Cardiac septum (tissue), 1 donor: ENCODE measurements at regions of chr11 and their contacts with region 1.

Region 1: DNA sequence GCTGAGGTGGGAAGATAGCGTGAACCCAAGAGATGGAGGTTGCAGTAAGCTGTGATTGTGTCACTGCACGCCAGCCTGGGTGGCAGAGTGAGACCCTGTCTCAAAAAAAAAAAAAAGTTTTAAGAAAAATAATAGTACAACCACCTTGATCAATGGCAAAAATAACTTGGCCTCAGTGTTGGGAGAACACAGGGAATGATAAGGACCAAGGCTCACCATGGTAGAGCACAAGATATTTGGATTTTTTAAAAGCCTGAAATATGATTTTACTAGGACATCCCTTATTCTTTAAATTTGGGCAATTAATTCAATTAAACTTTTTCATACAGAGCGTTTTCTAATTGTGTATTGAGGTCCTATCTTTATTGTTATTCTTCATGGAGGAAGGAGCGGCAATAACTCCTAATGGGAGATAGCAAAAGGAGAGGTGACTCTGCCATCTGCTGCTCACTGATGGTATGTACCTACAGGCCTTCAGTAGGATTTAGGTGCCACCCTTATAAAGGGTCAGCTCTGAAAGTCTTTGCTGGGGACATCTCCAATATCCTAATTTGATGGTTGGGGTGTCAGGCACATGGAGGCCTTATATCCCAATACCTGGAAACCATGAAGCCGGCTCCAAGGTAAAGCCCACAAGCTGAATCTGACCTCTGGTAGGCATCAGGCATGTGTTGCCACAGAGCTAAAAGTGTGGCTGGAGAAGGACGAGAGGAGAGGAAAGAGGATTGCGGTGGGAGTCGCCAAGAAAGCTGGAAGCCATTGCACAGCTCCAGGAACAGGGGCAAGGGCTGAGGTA is 21.9 kb upstream of the POLD3 start:
- DNase-seq: no peak

Region 2: DNA sequence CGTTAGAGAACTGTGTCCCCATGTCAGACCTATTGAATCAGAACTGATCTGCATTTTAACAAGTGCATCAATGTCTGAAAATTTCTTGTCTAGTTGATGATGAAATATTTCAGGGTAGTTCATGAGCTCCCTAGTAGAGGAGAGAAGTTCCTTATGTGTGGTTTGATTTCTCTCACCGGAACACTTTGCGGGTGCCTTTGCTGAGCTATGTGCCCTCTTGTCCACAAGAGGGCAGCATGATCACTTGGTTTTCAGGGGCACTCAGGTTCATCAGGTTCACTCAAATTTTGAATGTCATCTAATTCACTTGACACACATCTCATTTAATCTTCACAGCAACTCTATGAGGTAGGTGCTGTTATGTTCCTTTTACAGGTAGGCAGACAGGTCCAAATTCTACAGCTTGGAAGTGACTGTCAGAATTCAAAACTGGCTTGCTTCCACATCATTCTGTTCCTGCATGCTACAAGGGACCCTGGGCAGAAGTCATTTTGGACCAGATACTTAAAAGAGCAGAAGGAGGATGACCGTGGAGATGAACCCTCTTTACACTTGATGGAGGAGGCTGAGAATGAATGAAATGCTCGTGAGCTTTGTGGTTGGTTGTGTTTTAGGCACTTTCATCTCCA is 314.6 kb before region 1 on chr11:
- intact Hi-C with region 1: loop called (anchors 2 kb)
- DNase-seq: no peak

Region 3: GRCh38 chr11:74773481-74773880 is 203.0 kb after region 1 on chr11:
- intact Hi-C with region 1: no loop called
- DNase-seq: no peak